Calu3 (cell line): ENCODE measurements at regions of chr20 and their contacts with region 1.

Region 1: GRCh38 chr20:34445177-34446065 is 70.8 kb upstream of the DYNLRB1 start:
- DNase-seq: no peak
- H3K4me3 Mint-ChIP-seq: no peak overlapping the region
- H3K27ac Mint-ChIP-seq: no peak overlapping the region
- H3K4me1 Mint-ChIP-seq: no peaks in the 10 kb centered on the region
- H3K27me3 Mint-ChIP-seq: no peaks in the 10 kb centered on the region
- CTCF ChIP-seq: no peak

Region 2: GRCh38 chr20:34240693-34241615 is 204.5 kb before region 1 on chr20 and contains the start of gene ASIP:
- CTCF ChIA-PET with region 1: no interaction called
- intact Hi-C with region 1: no loop called
- DNase-seq: no peak
- H3K4me3 Mint-ChIP-seq: no peak within 1 kb of the TSS
- H3K27ac Mint-ChIP-seq: no peak within 1 kb of the TSS
- H3K4me1 Mint-ChIP-seq: no peaks in the 10 kb centered on the region
- H3K27me3 Mint-ChIP-seq: peaks cover 68% of the 10 kb centered on the region
- CTCF ChIP-seq: no peak
- total RNA-seq, gene ASIP: not detected in 2 replicates

Region 3: DNA sequence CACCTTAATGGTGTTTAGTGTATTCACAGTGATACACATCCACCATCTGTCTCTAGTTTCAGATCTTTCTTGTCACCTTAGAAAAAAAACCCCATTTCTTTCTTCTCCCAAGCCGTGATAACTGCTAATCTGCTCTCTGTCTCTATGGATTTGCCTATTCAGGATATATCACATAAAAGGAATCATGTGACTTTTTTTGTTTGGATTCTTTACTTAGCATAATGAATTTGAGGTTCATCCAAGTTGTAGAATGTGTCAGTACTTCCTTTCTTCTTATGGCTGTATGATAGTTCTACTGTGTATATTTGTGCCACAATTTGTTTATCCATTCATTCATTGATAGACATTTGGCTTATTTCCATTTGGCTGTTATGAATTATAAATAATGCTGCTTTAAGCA is 25.3 kb before region 1 on chr20:
- CTCF ChIA-PET with region 1: no interaction called
- intact Hi-C with region 1: no loop called
- DNase-seq: no peak
- H3K4me3 Mint-ChIP-seq: no peak overlapping the region
- H3K27ac Mint-ChIP-seq: no peak overlapping the region
- H3K4me1 Mint-ChIP-seq: peaks cover 31% of the 10 kb centered on the region
- H3K27me3 Mint-ChIP-seq: no peaks in the 10 kb centered on the region
- CTCF ChIP-seq: no peak

Region 4: DNA sequence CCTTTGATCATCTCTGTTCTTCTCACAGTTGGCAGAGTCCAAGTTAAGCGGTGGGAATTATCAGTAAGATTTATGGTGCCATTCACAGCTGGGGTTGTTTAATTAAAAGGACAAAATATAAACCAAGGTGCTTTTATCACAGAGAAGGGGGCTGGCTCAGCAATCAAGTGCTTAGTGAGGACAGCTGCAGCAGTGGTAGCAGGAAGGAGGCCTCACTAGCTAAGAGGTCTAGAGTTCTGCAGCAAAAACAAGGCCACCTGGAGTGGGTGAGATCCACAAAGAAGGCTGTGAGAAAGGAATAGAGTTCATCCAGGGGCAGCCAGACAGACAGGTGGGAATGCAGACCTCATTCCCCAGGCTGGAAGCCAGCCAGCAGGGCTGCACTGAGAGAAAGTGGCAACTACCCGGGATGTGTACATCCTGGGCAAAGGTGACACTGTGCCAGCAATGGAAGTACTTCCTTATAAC is 194.4 kb after region 1 on chr20:
- CTCF ChIA-PET with region 1: interaction called, 11 read pairs
- intact Hi-C with region 1: no loop called
- DNase-seq: peak; percentile 44
- H3K4me3 Mint-ChIP-seq: no peak overlapping the region
- H3K27ac Mint-ChIP-seq: no peak overlapping the region
- H3K4me1 Mint-ChIP-seq: peaks cover 14% of the 10 kb centered on the region
- H3K27me3 Mint-ChIP-seq: no peaks in the 10 kb centered on the region
- CTCF ChIP-seq: no peak